ENCODE measurements at regions of chr19 and their contacts with region 1.

Region 1: DNA sequence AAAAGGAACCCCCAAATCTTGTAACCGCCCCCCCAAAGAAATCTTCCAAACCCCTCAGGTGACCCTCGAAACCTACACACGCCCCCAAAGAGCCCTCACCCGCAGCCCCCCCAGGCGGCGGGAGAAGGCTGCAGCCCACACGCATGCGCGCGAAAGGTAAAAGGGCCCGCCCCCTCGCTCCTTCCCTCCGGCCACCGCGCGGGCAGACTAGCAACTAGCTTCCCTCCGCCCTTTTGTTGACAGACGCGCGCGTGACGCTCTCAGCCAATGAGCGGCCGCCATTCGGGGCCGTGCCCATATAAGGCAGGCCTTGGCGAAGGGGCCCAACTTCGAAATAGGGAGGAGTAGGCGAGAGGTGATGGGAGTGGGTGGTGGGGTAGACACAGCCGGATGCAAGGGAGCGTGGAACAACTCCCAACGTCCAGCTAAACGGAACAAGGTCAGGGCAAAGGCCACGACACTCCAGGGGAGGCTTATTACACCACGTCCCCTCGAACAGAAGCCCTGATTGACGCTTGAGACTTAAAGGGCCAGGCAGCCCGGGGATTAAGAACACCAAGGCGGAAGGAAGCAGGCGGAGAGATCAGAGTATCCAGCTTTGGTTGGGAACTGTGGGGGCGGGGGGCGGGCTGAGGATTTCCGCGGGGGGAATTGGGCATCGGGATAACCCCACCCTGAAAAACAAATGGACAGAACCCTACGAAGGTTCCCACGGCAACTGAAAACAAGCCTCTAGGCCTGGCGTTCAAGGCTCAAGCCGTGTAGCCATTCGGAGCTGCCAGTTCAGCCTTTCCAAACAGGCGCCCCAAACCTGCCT is 13.3 kb downstream of the FBXO46 start:
- DNase-seq: peak; percentile 100

Region 2: DNA sequence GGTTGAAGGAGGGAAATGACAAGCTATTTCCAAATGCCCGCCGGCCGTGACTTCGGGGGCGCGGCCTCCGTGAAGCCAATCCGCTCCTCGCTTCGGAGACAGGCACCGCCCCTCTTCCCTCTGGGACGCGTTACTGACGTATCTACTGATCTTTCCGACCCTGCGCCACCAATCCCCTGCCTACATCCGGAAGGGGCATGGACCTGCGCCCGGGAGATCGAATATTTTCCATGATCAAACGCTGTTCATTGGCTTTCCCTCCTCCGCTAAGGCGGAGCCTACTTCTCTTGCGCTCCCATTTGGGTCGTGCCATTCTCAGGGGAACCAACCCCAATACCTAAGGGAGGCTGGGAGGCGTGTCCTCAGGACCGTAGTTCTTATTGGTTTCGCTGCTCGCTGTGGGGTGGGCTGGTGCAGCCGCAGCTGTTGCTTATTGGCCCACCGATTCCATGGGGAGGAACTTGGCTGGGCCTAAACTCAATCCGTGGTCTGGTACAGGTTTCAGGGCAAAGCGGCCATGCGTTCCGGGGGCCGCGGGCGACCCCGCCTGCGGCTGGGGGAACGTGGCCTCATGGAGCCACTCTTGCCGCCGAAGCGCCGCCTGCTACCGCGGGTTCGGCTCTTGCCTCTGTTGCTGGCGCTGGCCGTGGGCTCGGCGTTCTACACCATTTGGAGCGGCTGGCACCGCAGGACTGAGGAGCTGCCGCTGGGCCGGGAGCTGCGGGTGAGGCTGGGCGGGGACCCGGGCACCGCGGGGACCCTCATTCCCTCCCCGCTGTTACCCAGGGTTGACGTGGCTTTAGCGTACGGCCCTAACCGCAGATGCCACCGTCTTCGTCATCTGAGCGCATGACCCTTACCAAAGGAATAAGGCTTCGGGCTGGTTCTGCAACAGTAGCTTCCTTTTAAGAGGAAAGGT is 24.9 kb before region 1 on chr19 and contains the start of gene QPCTL:
- intact Hi-C with region 1: loop called (anchors 2 kb)
- DNase-seq: peak; percentile 97
- total RNA-seq, gene QPCTL: 2.6 TPM

Region 3: GRCh38 chr19:45730389-45731288 is 13.3 kb after region 1 on chr19 and contains the start of gene FBXO46:
- intact Hi-C with region 1: loop called (anchors 2 kb)
- DNase-seq: peak; percentile 98
- total RNA-seq, gene FBXO46: 8.2 TPM